ENCODE measurements at regions of chr6 and their contacts with region 1.

Region 1: GRCh38 chr6:142323377-142324040 is 21.7 kb downstream of the ADGRG6 start:
- DNase-seq: peak; percentile 98
- ATAC-seq: peak; percentile 83
- H3K4me3 ChIP-seq: peak overlapping the region; percentile 33
- H3K27ac ChIP-seq: peak overlapping the region; percentile 96
- H3K4me1 ChIP-seq: peaks cover 73% of the 10 kb centered on the region
- H3K27me3 ChIP-seq: no peaks in the 10 kb centered on the region
- CTCF ChIP-seq: no peak

Region 2: DNA sequence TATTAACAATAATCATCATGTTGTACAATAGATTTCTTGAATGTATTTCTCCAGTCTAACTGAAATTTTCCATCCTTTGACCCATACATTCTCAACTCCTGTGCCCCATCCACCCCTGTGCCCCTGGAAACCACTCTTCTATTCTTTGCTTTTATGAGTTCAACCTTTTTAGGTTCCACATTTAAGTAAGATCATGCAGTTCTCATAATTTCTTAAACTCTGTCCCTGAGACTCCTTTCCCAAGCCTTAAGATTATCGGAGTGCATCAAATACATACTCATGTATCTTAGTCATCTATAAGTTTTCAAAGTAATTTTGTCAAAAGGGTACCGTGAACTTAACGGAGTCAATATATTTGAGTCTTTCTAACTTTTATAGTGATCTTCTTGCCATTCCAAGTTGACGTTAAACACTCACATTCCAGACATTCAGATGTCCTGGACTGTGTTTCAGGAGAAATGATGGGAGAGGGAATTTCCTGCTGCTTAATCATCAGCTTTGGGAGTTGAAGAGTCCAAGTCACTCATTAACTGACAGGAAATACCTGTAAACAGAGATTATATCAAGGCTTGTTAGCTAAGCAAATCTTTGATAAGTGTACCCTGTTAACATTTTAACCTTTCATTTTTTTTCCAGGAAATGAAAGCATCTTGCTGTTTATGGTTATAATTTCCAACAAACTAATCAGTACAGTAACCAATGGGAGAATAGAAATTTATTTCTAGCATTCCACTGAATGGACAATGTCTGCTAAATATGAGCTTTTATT is 51.6 kb after region 1 on chr6:
- CTCF ChIA-PET with region 1: interaction called, 3 read pairs
- POLR2A ChIA-PET with region 1: no interaction called
- intact Hi-C with region 1: loop called (anchors 2 kb)
- DNase-seq: peak; percentile 95
- ATAC-seq: peak; percentile 33
- H3K4me3 ChIP-seq: 0 out of 2 replicates have a peak overlapping the region, but pooled peaks have one; percentile 23
- H3K27ac ChIP-seq: peak overlapping the region; percentile 100
- H3K4me1 ChIP-seq: peaks cover 73% of the 10 kb centered on the region
- H3K27me3 ChIP-seq: no peaks in the 10 kb centered on the region
- CTCF ChIP-seq: no peak

Region 3: DNA sequence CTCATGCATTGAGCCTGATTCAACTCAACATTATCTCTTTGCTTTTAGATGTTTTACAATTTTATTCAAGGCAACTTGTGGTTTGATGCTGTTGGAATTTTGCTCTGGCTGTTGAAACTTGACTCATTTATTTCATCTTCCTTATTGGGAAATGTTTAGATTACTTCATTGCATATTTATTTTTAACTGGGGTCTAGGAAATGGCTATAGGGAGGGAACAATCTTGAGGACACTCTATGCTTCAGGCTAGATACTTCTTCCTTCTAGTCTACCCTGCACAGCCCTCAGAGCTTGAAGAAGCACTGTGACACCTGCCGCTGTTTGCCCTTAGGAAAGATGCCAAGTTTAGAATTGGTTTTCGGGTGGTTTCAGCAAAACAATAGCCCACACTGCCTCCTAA is 161.7 kb after region 1 on chr6:
- CTCF ChIA-PET with region 1: no interaction called
- POLR2A ChIA-PET with region 1: no interaction called
- intact Hi-C with region 1: no loop called
- DNase-seq: no peak
- ATAC-seq: no peak
- H3K4me3 ChIP-seq: no peak overlapping the region
- H3K27ac ChIP-seq: no peak overlapping the region
- H3K4me1 ChIP-seq: no peaks in the 10 kb centered on the region
- H3K27me3 ChIP-seq: no peaks in the 10 kb centered on the region
- CTCF ChIP-seq: no peak

Measured in PC-3 (cell line).